Cardiac septum (tissue), 1 donor: ENCODE measurements at regions of chr14 and their contacts with region 1.

Region 1: GRCh38 chr14:22986508-22987054 is 4.2 kb upstream of the AJUBA start:
- DNase-seq: peak; percentile 95

Region 2: DNA sequence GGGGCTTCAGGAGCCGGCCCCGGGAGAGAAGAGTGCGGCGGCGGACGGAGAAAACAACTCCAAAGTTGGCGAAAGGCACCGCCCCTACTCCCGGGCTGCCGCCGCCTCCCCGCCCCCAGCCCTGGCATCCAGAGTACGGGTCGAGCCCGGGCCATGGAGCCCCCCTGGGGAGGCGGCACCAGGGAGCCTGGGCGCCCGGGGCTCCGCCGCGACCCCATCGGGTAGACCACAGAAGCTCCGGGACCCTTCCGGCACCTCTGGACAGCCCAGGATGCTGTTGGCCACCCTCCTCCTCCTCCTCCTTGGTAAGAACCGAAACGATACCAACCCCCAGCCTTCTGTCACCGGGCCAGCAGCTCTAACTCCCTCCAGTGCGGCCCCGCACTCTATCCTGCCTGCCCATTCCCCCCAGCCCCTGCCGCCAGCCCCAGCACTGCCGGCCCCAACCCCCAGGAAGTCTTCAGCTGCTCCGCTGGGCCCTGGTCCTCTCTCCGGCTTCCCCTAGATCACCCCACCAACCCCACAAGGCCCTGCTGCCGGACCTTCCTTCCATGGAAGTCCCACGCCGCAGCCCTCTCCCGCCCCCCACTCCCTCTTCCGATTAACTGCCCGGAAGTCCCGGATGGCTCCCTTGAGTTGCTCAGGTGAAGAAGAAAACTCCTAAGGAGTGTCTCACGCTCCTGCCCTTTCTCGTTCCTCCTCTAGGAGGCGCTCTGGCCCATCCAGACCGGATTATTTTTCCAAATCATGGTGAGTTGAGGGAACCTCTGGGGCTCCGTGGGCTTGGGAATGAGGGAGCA is 114.3 kb before region 1 on chr14:
- intact Hi-C with region 1: loop called (anchors 1 kb)
- DNase-seq: peak; percentile 92

Region 3: GRCh38 chr14:22929104-22929847 is 57.3 kb before region 1 on chr14 and contains the start of gene PRMT5:
- intact Hi-C with region 1: loop called (anchors 2 kb)
- DNase-seq: peak; percentile 99
- total RNA-seq, gene PRMT5: 40.2 TPM

Region 4: GRCh38 chr14:22955702-22956569 is 30.6 kb before region 1 on chr14:
- intact Hi-C with region 1: loop called (anchors 2 kb)
- DNase-seq: peak; percentile 57

Region 5: GRCh38 chr14:23057757-23058653 is 71.4 kb after region 1 on chr14:
- intact Hi-C with region 1: loop called (anchors 1 kb)
- DNase-seq: peak; percentile 93